Activated naive CD4-positive, alpha-beta T cell treated with anti-CD3 and anti-CD28 coated beads for 36 hours (primary cell): ENCODE measurements at regions of chr12 and their contacts with region 1.

Region 1: DNA sequence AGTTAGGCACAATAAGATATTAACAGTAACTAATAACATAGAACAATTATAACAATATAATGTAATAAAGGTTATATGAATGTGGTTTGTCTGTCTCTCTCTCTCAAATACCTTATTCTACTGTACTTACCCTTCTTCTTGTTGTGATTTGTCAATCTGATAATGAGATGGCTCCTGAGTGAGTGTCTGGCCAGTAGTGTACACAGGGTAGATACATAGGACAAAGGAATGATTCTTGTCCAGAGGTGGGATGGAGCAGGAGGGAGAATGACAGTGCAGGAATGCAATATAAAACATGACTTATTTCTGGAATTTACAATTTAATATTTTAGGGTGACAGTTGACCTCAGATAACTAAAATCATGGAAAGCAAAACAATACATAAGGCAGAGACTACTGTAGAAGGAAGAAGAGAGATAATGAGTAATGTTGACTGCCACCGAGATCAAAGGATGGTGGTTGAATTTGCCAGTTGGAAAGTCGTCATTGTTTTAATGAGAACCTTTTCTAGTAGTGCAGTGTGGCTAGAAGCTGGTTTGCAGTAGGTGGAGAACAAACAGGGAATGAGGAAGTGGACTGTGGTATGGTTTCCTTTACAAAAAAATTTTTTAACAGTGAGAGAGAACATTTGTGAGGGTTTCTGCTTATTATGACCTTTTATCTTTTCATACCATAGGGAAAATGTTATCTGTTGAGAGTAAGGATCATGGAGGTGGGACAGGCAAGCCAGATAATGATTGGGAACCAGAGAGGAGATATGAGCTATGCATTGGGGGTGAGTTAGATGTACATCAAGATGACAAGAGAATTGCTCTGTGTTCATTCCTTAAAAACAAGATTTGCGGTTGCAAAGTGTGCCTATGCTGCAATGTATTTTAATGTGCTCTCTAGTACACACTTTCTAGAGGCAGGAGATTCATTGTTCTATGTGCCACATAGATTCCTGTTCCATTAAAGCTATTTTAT is 458.3 kb downstream of the BTG1 start:
- DNase-seq: peak; percentile 42
- H3K4me3 Mint-ChIP-seq: no peak overlapping the region
- H3K27ac Mint-ChIP-seq: peak overlapping the region; percentile 20
- H3K4me1 Mint-ChIP-seq: peaks cover 16% of the 10 kb centered on the region
- H3K27me3 Mint-ChIP-seq: no peaks in the 10 kb centered on the region

Region 2: DNA sequence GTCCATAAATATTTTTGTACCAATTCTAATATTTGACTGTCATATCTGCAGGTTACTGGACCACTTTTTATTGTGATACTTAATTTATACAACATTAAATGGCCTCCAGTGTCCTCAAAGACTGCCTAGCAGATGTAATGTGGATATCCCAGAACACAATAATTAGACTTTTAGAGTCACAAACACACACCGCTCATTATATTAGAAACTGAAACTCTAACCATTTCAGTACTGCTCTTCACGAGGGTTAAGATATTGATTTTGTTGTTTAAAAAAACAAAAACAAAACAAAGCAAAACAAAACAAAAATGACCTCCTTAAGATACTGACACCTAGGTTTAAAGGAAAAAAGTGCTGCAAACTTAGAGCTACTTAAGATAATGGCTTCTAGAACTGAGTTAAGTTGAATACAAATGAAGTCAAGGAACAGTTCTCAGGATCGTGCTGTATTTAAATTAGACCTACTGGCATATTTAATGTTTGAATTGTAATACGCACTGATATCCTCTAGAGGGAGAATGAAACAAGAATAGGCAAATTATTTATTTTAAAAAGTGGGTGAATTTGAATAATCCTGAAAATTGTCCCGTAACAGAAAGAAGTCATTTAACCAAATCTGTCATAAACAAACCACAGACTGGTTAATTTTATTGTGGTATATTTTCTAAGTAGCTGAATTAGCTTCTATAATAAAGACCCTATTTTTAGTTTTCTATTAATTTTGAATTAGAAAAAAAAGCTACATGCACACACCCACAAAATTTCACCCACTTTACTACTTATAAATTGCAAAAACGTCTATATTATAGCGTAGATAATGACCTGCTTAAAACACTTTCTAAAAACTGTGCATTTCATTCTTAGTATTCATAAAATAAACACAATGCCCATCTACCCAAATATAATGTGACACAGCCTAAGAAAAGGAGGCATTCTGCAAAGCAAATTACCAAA is 109.5 kb before region 1 on chr12:
- CTCF ChIA-PET with region 1: no interaction called
- intact Hi-C with region 1: loop called (anchors 2 kb)
- DNase-seq: no peak
- H3K4me3 Mint-ChIP-seq: peak overlapping the region; percentile 71
- H3K27ac Mint-ChIP-seq: peak overlapping the region; percentile 61
- H3K4me1 Mint-ChIP-seq: peaks cover 19% of the 10 kb centered on the region
- H3K27me3 Mint-ChIP-seq: no peaks in the 10 kb centered on the region

Region 3: GRCh38 chr12:91588874-91589454 is 98.4 kb before region 1 on chr12:
- CTCF ChIA-PET with region 1: no interaction called
- intact Hi-C with region 1: no loop called
- DNase-seq: no peak
- H3K4me3 Mint-ChIP-seq: no peak overlapping the region
- H3K27ac Mint-ChIP-seq: no peak overlapping the region
- H3K4me1 Mint-ChIP-seq: no peaks in the 10 kb centered on the region
- H3K27me3 Mint-ChIP-seq: no peaks in the 10 kb centered on the region